B cell (primary cell): ENCODE measurements at regions of chr1 and their contacts with region 1.

Region 1: DNA sequence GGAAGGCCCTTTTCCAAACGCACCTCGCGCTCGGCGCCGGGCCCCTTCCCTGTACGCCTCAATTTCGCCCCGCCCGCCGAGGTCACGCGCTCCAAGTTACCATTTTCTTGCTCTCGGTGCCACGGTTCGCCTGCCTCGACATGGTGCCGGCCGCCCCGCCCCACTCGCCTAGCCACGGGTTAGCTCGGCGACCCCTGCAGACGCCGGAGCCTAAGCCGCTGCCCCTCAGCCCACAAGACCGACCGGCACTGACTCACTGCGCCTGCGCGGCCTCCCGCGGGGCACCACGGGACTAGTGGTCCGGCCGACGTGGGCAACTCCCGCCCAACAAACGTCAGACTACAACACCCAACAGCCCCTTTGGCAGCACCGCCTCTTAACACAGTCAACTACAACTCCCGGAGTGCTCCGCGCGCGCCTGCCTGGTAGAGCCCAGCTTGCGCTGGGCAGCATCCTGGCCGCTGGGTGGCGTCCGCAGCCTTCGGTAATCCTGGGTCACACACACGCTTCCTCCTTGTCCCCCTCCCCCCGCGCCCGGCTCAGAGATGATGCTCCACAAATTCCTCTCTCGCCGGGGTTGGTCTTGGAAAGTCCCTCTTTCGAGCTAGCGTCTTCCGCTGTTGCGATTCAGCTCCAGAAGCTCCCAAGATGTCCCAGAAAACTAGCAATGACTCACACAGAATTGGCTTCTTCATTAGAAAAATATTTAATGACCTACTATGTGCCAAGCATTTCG is at the start of gene TRAPPC3:
- DNase-seq: peak; percentile 99
- ATAC-seq: peak; percentile 93
- H3K4me3 ChIP-seq: peak within 1 kb of the TSS; percentile 74 to 84 (median 83)
- H3K4me3 Mint-ChIP-seq: peak within 1 kb of the TSS; percentile 99
- H3K27ac ChIP-seq: peak within 1 kb of the TSS; percentile 77 to 94
- H3K27ac Mint-ChIP-seq: peak within 1 kb of the TSS; percentile 98
- H3K4me1 ChIP-seq: peaks cover 32 to 41% of the 10 kb centered on the region in 2 donors
- H3K4me1 Mint-ChIP-seq: peaks cover 63% of the 10 kb centered on the region
- H3K27me3 ChIP-seq: no peaks in the 10 kb centered on the region
- H3K27me3 Mint-ChIP-seq: no peaks in the 10 kb centered on the region
- CTCF ChIP-seq: peak; percentile 89
- total RNA-seq, gene TRAPPC3: 42.1 and 45.2 TPM in 2 replicates

Region 2: DNA sequence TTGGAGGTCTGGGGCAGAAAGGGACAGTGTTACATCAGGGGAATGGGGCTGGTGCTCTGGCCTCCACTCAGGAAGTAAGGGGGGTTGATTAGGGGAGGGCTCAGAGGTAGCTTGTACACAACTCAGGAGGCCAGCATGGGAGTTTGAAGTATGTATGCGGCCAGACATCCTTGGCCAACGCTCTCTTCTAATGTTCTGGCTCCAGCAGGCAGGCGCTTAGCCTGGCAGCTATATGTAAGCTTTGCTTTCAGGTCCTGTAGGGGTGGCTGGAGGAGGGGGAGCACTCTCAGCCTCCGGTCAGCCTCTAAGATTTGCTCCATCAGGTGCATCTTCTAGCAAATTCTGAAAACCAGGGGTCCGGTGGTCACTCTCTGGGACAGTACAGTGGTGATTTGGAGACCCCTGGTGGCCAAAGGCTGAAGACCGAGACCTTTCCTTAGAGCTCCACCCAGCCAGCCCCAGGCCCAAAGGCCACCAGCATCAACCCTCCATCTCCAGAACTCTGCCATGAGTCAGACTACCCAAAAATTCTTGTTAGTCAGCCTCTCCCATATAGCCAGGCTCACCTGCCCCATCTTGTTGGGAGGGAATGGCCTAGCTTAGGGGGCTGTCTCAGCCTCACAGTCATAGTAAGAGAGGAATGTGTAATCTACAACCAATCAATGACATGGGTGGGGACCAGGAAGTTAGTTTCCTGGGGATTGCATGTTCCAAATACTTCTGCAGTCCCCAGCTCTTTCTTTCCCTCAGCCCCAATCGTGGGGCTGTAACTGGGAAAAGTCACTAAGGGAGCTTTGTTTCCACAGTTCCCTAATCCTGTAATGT is 14.7 kb before region 1 on chr1:
- CTCF ChIA-PET with region 1: interaction called, 14 read pairs
- POLR2A ChIA-PET with region 1: no interaction called
- intact Hi-C with region 1: no loop called
- DNase-seq: peak; percentile 56
- ATAC-seq: peak; percentile 49
- H3K4me3 ChIP-seq: no peak overlapping the region
- H3K4me3 Mint-ChIP-seq: no peak overlapping the region
- H3K27ac ChIP-seq: no peak overlapping the region
- H3K27ac Mint-ChIP-seq: no peak overlapping the region
- H3K4me1 ChIP-seq: no peaks in the 10 kb centered on the region
- H3K4me1 Mint-ChIP-seq: no peaks in the 10 kb centered on the region
- H3K27me3 ChIP-seq: no peaks in the 10 kb centered on the region
- H3K27me3 Mint-ChIP-seq: no peaks in the 10 kb centered on the region
- CTCF ChIP-seq: peak; percentile 57

Region 3: GRCh38 chr1:36223993-36224536 is 74.7 kb after region 1 on chr1 and contains the start of gene THRAP3:
- CTCF ChIA-PET with region 1: interaction called, 32 read pairs
- POLR2A ChIA-PET with region 1: interaction called, 21 read pairs
- intact Hi-C with region 1: loop called (anchors 1 kb)
- DNase-seq: peak; percentile 100
- ATAC-seq: peak; percentile 88
- H3K4me3 ChIP-seq: peak within 1 kb of the TSS; percentile 77 to 98 (median 91)
- H3K4me3 Mint-ChIP-seq: peak within 1 kb of the TSS; percentile 98
- H3K27ac ChIP-seq: peak within 1 kb of the TSS; percentile 95 to 100
- H3K27ac Mint-ChIP-seq: peak within 1 kb of the TSS; percentile 100
- H3K4me1 ChIP-seq: peaks cover 22 to 43% of the 10 kb centered on the region in 2 donors
- H3K4me1 Mint-ChIP-seq: peaks cover 34% of the 10 kb centered on the region
- H3K27me3 ChIP-seq: no peaks in the 10 kb centered on the region
- H3K27me3 Mint-ChIP-seq: no peaks in the 10 kb centered on the region
- CTCF ChIP-seq: no peak
- total RNA-seq, gene THRAP3: 153 and 159 TPM in 2 replicates

Region 4: DNA sequence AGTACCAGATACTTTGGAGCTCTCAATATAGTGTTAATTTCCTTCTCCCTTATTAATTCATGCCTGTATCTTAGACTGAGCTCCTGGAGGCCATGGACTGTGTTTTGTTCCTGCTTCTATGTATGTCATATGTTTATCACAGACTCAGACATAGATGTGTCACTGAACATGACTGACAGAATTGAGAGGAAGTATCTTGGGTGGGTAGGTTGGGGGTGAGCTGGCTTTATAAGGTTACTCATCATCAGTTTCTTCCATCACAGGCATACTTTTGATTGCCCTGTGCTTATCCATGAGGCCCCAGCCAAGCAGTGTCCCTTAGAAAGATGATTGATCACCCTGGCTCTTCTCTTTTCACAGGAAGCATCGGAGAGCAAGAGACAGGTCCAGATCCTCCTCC is 151.1 kb after region 1 on chr1:
- CTCF ChIA-PET with region 1: interaction called, 10 read pairs
- POLR2A ChIA-PET with region 1: no interaction called
- intact Hi-C with region 1: no loop called
- DNase-seq: no peak
- ATAC-seq: no peak
- H3K4me3 ChIP-seq: no peak overlapping the region
- H3K4me3 Mint-ChIP-seq: no peak overlapping the region
- H3K27ac ChIP-seq: no peak overlapping the region
- H3K27ac Mint-ChIP-seq: peak overlapping the region; percentile 8
- H3K4me1 ChIP-seq: peaks cover 0 to 15% of the 10 kb centered on the region in 2 donors
- H3K4me1 Mint-ChIP-seq: peaks cover 23% of the 10 kb centered on the region
- H3K27me3 ChIP-seq: no peaks in the 10 kb centered on the region
- H3K27me3 Mint-ChIP-seq: no peaks in the 10 kb centered on the region
- CTCF ChIP-seq: no peak

Region 5: DNA sequence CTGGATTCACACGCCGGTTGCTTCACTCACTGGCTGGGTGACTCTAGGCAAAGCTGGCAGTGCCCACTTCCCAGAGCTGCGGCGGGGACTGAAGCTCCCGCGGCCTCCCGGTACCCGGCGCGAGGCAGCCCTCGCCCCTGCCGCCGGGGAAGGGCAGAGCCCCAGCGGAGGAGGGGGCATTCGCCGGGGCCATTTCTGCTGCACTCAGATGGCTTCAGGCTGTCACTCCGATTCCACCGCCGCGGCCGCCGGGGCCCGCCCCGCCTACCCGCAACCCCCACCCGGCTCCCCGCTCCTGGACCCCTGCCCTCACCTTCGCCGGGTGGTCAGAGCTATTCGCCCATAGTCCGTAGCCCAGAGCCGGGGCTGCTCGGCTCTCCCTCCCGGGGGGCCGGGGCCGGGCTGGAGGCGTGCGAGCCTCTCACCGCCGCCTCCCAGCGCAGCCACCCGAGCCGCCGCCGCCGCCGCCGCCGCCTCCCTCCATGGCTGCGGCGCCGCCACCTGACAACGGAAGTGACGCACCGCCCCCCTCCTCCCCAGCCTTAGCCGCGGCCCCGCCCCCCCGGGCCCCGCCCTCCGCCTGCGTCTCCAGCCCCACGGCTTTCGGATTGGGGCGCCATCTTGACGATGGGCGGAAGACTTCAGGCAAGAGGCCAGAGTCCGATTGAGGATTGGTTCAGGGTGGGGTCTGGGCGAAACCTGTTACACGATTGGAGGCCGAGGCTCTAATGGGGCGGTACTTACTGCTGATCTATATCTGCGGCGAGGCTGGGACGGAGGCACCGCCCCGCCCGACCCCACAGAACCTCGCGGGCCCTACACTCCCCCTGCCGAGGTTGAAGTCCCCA is 236.2 kb after region 1 on chr1 and contains the start of gene STK40:
- CTCF ChIA-PET with region 1: interaction called, 9 read pairs
- POLR2A ChIA-PET with region 1: interaction called, 4 read pairs
- intact Hi-C with region 1: loop called (anchors 1 kb)
- DNase-seq: peak; percentile 98
- ATAC-seq: peak; percentile 84
- H3K4me3 ChIP-seq: peak within 1 kb of the TSS; percentile 74 to 97 (median 93)
- H3K4me3 Mint-ChIP-seq: peak within 1 kb of the TSS; percentile 97
- H3K27ac ChIP-seq: peak within 1 kb of the TSS; percentile 92 to 93
- H3K27ac Mint-ChIP-seq: peak within 1 kb of the TSS; percentile 100
- H3K4me1 ChIP-seq: peaks cover 64 to 80% of the 10 kb centered on the region in 2 donors
- H3K4me1 Mint-ChIP-seq: peaks cover 79% of the 10 kb centered on the region
- H3K27me3 ChIP-seq: no peaks in the 10 kb centered on the region
- H3K27me3 Mint-ChIP-seq: no peaks in the 10 kb centered on the region
- CTCF ChIP-seq: no peak
- total RNA-seq, gene STK40: 69.1 and 72.8 TPM in 2 replicates

Region 6: DNA sequence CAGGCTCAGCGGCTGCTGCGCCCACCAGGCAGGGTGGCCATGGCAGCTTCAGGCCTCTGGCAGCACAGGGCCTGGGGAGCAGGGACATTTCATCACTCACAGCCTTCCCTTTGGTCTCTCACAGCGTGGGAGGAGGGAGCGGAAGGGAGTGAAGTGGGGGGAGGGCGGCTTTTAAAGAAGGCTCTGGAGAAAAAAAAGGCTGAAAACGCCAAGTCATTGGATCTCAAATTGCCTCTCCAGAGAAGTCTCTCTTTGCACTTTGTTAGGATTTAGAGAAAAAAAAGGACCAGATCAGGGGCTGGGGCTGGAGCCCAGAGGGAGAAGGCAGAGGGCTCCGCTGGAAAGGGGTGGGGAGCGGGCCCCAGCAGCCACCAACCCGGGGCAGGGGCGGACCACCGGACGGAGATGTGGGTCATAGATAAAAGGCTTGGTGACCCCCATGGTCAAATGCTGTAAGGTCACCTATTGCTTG is 675.0 kb after region 1 on chr1:
- CTCF ChIA-PET with region 1: no interaction called
- POLR2A ChIA-PET with region 1: no interaction called
- intact Hi-C with region 1: no loop called
- DNase-seq: no peak
- ATAC-seq: no peak
- H3K4me3 ChIP-seq: no peak overlapping the region
- H3K4me3 Mint-ChIP-seq: no peak overlapping the region
- H3K27ac ChIP-seq: no peak overlapping the region
- H3K27ac Mint-ChIP-seq: no peak overlapping the region
- H3K4me1 ChIP-seq: no peaks in the 10 kb centered on the region
- H3K4me1 Mint-ChIP-seq: no peaks in the 10 kb centered on the region
- H3K27me3 ChIP-seq: peaks cover 0 to 4% (median 0%) of the 10 kb centered on the region in 4 experiments
- H3K27me3 Mint-ChIP-seq: peaks cover 15% of the 10 kb centered on the region
- CTCF ChIP-seq: no peak

Region 7: GRCh38 chr1:37692078-37692833 is 1542.9 kb after region 1 on chr1 and contains the start of gene CDCA8:
- CTCF ChIA-PET with region 1: no interaction called
- POLR2A ChIA-PET with region 1: no interaction called
- intact Hi-C with region 1: loop called (anchors 5 kb)
- DNase-seq: peak; percentile 99
- ATAC-seq: peak; percentile 89
- H3K4me3 ChIP-seq: peak within 1 kb of the TSS; percentile 52 to 91 (median 74)
- H3K4me3 Mint-ChIP-seq: peak within 1 kb of the TSS; percentile 99
- H3K27ac ChIP-seq: peak within 1 kb of the TSS; percentile 19 to 65
- H3K27ac Mint-ChIP-seq: peak within 1 kb of the TSS; percentile 94
- H3K4me1 ChIP-seq: peaks cover 19 to 34% of the 10 kb centered on the region in 2 donors
- H3K4me1 Mint-ChIP-seq: peaks cover 40% of the 10 kb centered on the region
- H3K27me3 ChIP-seq: no peaks in the 10 kb centered on the region
- H3K27me3 Mint-ChIP-seq: no peaks in the 10 kb centered on the region
- CTCF ChIP-seq: peak; percentile 67
- total RNA-seq, gene CDCA8: 1.3 and 1.5 TPM in 2 replicates